ENCODE measurements at regions of chr2 and their contacts with region 1.

Region 1: GRCh38 chr2:48235076-48235475 is 294.9 kb upstream of the STON1 start:
- DNase-seq: peak; percentile 5
- H3K4me3 ChIP-seq: no peak overlapping the region
- H3K27ac ChIP-seq: no peak overlapping the region
- H3K4me1 ChIP-seq: peaks cover 5% of the 10 kb centered on the region
- H3K27me3 ChIP-seq: no peaks in the 10 kb centered on the region
- CTCF ChIP-seq: no peak

Region 2: DNA sequence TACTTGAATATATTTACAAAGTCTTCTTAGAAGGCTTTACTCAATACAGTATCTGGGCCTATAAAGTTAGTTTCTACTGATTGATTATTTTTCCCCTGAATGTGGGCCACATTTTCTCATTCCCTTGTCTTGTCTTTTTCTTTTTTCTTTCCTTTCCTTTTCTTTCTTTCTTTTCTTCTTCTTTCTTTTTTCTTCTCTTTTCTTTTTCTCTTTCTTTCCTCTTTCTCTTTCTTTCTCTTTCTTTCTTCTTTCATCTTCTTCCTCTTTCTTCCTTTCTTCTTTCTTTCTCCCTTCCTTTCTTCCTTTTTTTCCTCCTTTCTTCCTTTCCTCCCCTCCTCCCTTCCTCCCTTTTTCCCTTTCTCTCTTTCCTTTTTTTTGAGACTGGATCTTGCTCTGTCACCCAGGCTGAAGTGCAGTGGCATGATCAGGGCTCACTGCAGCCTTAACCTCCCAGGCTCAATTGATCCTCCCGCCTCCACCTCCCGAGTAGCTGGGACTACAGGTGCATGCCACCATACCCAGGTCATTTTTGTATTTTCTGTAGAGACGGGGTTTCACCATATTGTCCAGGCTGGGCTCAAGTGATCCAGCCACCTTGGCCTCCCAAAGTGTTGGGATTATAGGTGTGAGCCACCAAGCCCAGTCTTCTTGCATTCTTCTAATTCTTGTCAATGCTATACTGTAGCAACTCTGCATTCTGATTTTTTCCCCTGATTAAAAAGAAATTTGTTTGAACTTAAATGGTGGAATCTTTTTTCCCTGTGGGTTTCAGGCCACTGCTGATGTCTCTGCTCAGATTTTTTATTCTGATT is 195.7 kb before region 1 on chr2:
- CTCF ChIA-PET with region 1: no interaction called
- POLR2A ChIA-PET with region 1: interaction called, 19 read pairs
- intact Hi-C with region 1: no loop called
- DNase-seq: no peak
- H3K4me3 ChIP-seq: no peak overlapping the region
- H3K27ac ChIP-seq: no peak overlapping the region
- H3K4me1 ChIP-seq: no peaks in the 10 kb centered on the region
- H3K27me3 ChIP-seq: no peaks in the 10 kb centered on the region
- CTCF ChIP-seq: no peak

Region 3: DNA sequence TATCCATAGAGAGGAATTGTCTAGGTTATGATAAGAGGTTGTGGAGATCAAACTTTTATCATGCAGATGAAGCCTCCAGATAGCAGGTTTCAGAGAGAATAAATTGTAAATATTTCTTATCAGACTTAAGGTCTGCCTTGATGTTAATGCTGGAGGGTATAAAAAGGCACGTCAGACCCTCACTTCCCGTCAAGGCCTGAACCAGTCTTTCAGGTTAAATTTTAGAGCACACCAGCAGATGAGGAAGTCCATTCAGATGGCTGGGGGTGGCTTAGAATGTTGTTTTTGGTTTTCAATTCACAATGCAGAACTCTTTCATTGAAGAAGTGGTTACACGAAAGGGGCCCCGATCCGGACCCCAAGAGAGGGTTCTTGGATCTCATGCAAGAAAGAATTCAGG is 184.4 kb before region 1 on chr2:
- CTCF ChIA-PET with region 1: no interaction called
- POLR2A ChIA-PET with region 1: no interaction called
- intact Hi-C with region 1: no loop called
- DNase-seq: no peak
- H3K4me3 ChIP-seq: no peak overlapping the region
- H3K27ac ChIP-seq: no peak overlapping the region
- H3K4me1 ChIP-seq: no peaks in the 10 kb centered on the region
- H3K27me3 ChIP-seq: no peaks in the 10 kb centered on the region
- CTCF ChIP-seq: no peak

Measured in A673 (cell line).